A549 (cell line): ENCODE measurements at regions of chr2 and their contacts with region 1.

Region 1: GRCh38 chr2:24971536-24972314 is at the start of gene DNAJC27:
- DNase-seq: peak; percentile 99
- ATAC-seq: peak; percentile 97
- H3K4me3 ChIP-seq: peak within 1 kb of the TSS; percentile 94
- H3K27ac ChIP-seq: peak within 1 kb of the TSS; percentile 93 to 98
- H3K4me1 ChIP-seq: peaks cover 11% of the 10 kb centered on the region; the same call in 2 of the 3 replicates
- CTCF ChIP-seq: no peak
- EP300 ChIP-seq: no peak
- POLR2A ChIP-seq: peak; percentile 93
- RAD21 ChIP-seq: no peak
- polyA plus RNA-seq, gene DNAJC27: 5.2 and 7.8 TPM in 2 replicates

Region 2: GRCh38 chr2:24959761-24960160 is 12.0 kb before region 1 on chr2:
- CTCF ChIA-PET with region 1: interaction called, 13 read pairs
- POLR2A ChIA-PET with region 1: no interaction called
- DNase-seq: no peak
- ATAC-seq: no peak
- H3K4me3 ChIP-seq: no peak overlapping the region
- H3K27ac ChIP-seq: no peak overlapping the region
- H3K4me1 ChIP-seq: no peaks in the 10 kb centered on the region
- CTCF ChIP-seq: no peak
- EP300 ChIP-seq: no peak
- POLR2A ChIP-seq: no peak
- RAD21 ChIP-seq: no peak

Region 3: DNA sequence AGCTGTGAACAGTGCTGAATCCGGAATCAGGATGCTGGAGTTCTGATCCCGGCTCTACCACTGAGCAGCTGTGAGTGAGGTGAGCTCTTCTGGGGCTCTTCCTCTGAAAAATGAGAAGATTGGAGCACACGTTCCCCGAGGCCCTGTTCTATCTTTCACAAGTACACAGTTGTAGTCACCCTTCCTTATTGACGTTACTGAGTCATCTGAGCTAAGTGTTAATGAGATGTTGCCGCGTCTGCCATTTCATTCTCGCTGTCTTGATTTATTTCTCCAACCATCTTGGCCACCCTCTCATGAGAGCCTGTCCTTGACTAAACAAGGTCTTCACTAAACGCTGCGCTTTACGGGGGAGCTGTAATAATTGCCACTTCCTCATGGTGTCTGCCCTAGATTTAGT is 38.2 kb after region 1 on chr2:
- CTCF ChIA-PET with region 1: interaction called, 15 read pairs
- POLR2A ChIA-PET with region 1: interaction called, 3 read pairs
- DNase-seq: peak in 1 of 2 experiments; percentile 35
- ATAC-seq: peak; percentile 26 to 67; a peak in 3 of 6 replicates
- H3K4me3 ChIP-seq: no peak overlapping the region
- H3K27ac ChIP-seq: no peak overlapping the region
- H3K4me1 ChIP-seq: peaks cover 7% of the 10 kb centered on the region; the same call in 2 of the 3 replicates
- CTCF ChIP-seq: no peak
- EP300 ChIP-seq: no peak
- POLR2A ChIP-seq: no peak
- RAD21 ChIP-seq: no peak

Region 4: DNA sequence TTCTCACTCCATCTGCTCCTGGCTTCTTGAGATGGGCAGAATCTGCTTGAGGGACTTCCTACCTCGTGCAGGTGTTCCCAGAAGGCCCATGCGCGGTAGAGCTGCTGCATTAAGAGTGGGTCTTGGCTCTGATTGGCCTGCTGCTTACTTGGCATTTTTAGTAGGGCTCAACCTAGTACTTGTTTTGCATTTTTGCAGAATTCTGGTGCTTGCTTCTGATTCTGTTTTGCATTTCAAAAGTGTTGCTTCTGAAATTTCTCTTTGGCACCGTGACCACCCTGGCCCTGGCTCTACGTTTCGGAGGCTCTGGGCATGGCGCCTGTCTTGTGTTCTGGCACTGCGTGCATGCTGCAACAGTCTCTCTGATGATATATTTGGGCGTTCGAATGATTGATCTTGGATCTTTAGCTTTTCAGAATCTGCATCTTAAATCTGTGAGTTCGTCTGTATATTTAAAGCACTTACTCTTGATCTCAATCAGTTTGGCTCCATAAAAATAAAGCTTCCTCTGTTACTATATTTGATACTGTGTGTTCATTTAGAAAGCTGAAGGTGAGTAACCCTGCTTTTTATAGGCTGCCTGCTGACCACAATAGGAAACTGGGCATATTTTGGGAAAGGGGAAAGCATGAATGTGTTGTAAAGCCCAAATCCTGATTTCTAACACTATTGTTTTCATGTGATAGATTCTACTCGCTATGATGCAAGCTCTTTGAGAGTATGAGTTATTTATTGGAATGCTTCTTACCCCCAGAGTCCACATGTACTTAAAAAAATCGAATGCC is 92.3 kb after region 1 on chr2:
- CTCF ChIA-PET with region 1: interaction called, 11 read pairs
- POLR2A ChIA-PET with region 1: no interaction called
- DNase-seq: no peak
- ATAC-seq: no peak
- H3K4me3 ChIP-seq: no peak overlapping the region
- H3K27ac ChIP-seq: no peak overlapping the region
- H3K4me1 ChIP-seq: 0 out of 3 replicates have a peak, but pooled peaks cover 8% of the 10 kb centered on the region
- CTCF ChIP-seq: no peak
- EP300 ChIP-seq: no peak
- POLR2A ChIP-seq: no peak
- RAD21 ChIP-seq: no peak

Region 5: GRCh38 chr2:25103287-25103871 is 131.7 kb after region 1 on chr2:
- CTCF ChIA-PET with region 1: interaction called, 50 read pairs
- POLR2A ChIA-PET with region 1: interaction called, 12 read pairs
- DNase-seq: peak; percentile 43 to 82
- ATAC-seq: peak; percentile 61
- H3K4me3 ChIP-seq: no peak overlapping the region
- H3K27ac ChIP-seq: peak overlapping the region; percentile 81 to 89
- H3K4me1 ChIP-seq: peaks cover 60% of the 10 kb centered on the region
- CTCF ChIP-seq: no peak
- EP300 ChIP-seq: no peak
- POLR2A ChIP-seq: no peak
- RAD21 ChIP-seq: no peak

Region 6: DNA sequence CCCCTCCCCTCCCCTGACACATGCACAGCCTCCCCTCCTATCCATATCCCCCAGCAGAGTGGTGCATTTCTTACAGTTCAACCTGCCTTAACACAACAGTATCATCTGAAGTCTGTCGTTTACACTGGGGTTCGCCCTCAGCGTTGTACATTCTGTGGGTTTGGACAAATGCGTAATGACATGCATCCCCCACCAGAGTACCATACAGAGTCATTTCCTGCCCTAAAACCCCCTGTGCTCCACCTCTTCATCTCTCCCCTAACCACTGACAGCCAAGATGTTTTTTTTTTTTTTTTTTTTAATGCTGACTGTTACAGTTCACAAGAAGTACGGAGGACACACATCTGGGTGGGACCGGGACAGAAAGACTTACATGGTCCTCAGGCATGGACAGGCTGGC is 174.1 kb after region 1 on chr2:
- CTCF ChIA-PET with region 1: interaction called, 11 read pairs
- POLR2A ChIA-PET with region 1: no interaction called
- DNase-seq: no peak
- ATAC-seq: no peak; a peak in 1 of 6 replicates
- H3K4me3 ChIP-seq: no peak overlapping the region
- H3K27ac ChIP-seq: no peak overlapping the region
- H3K4me1 ChIP-seq: no peaks in the 10 kb centered on the region
- CTCF ChIP-seq: no peak
- EP300 ChIP-seq: no peak
- POLR2A ChIP-seq: no peak
- RAD21 ChIP-seq: no peak

Region 7: GRCh38 chr2:25228848-25229278 is 257.1 kb after region 1 on chr2:
- CTCF ChIA-PET with region 1: interaction called, 12 read pairs
- POLR2A ChIA-PET with region 1: no interaction called
- DNase-seq: peak; percentile 84 to 97
- ATAC-seq: peak; percentile 94 to 98
- H3K4me3 ChIP-seq: no peak overlapping the region
- H3K27ac ChIP-seq: peak overlapping the region in 1 of 2 experiments; percentile 11; a peak in 1 of 6 replicates
- H3K4me1 ChIP-seq: peaks cover 9% of the 10 kb centered on the region
- CTCF ChIP-seq: peak; percentile 66
- EP300 ChIP-seq: no peak
- POLR2A ChIP-seq: no peak
- RAD21 ChIP-seq: peak; percentile 36 to 57; a peak in 3 of 5 replicates